Activated naive CD4-positive, alpha-beta T cell treated with anti-CD3 and anti-CD28 coated beads, Interleukin-2, amount 10 ng/mL, durations not matched to agents 7 days and 5 days (primary cell): ENCODE measurements at regions of chr3 and their contacts with region 1.

Region 1: GRCh38 chr3:192816351-192816750 is 89.0 kb upstream of the FGF12 start:
- DNase-seq: no peak
- H3K4me3 Mint-ChIP-seq: no peak overlapping the region
- H3K27ac Mint-ChIP-seq: no peak overlapping the region
- H3K4me1 Mint-ChIP-seq: peaks cover 47% of the 10 kb centered on the region
- H3K27me3 Mint-ChIP-seq: no peaks in the 10 kb centered on the region

Region 2: GRCh38 chr3:192675958-192676649 is 140.2 kb before region 1 on chr3:
- CTCF ChIA-PET with region 1: no interaction called
- DNase-seq: no peak
- H3K4me3 Mint-ChIP-seq: no peak overlapping the region
- H3K27ac Mint-ChIP-seq: no peak overlapping the region
- H3K4me1 Mint-ChIP-seq: no peaks in the 10 kb centered on the region
- H3K27me3 Mint-ChIP-seq: no peaks in the 10 kb centered on the region

Region 3: DNA sequence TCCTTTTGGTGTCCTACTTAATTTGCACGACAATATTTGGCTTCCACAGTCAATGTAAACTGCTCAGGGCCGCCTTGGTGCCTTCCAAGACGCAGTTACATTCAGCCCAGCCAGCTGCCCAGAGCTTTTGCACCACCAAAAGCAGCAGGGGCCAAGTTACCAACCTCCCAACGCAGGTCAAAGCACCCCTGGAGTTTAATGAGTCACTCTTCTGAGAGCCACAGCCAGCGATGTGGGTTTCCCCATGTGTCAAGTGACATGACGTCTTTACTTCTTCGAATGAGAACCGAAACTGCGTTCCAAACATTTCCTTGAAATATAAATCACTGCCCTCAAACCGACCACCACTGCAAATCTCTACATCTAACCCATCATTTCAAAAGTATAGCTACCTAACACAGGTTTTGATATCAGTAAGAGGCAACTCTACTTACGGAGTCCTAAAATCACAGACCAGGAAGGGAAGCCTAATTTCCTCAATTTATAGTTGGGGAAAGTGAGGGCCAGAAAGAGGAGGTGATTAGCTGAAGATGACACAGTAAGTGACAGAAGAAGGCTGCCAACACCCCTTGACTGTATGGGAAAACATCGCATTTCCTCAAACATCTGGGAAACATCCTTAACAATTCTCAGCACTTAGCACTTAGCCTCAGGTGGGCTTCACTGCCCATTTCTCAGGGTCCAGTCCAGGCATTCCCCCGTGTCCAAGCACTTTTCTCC is 76.8 kb after region 1 on chr3:
- CTCF ChIA-PET with region 1: interaction called, 11 read pairs
- DNase-seq: peak; percentile 82
- H3K4me3 Mint-ChIP-seq: peak overlapping the region; percentile 40
- H3K27ac Mint-ChIP-seq: peak overlapping the region; percentile 81
- H3K4me1 Mint-ChIP-seq: peaks cover 94% of the 10 kb centered on the region
- H3K27me3 Mint-ChIP-seq: peaks cover 19% of the 10 kb centered on the region

Region 4: DNA sequence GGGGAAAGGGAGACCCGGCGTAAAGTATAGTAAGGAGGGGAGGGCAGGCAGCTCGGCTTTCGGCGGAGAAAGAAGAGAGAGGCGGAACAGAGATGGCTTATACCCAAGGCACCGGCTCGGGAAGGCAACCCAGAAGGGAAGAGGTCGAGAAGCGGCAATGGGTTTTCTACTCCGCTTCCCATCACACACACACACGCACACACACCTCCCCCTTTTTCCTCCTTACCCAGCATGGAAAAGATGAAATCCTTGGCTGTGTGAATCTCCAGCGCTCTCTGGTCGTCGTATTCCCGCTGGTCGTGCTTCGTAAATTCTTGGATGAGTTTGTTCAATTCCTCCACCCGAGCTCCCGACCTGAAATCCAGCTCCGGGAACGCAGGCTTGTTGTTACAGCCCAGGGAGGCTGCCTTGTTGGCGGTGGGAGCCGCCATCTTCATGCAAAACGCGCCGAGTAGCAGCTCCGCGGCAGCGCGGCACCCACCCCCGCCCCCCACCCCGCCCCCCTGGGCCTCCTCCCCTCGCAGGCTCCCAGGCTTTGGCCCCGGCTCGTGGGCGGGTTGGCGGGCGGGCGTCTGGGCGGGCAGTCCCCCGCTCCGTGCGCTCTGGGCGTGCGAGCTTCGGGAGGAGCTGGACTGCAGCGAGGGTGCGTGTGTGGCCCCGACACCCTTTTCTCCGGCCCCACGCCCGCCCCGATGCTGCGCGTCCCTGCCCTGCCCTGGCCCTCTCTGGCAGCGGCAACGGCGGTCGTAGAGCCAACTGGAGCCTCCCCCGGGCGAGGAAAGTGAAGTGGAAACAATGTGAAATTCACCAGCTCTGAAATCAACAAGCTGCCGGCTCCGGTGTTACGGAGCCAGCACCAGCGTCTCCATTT is 101.3 kb after region 1 on chr3 and contains the start of gene MB21D2:
- CTCF ChIA-PET with region 1: interaction called, 41 read pairs
- DNase-seq: peak; percentile 74
- H3K4me3 Mint-ChIP-seq: peak within 1 kb of the TSS; percentile 93
- H3K27ac Mint-ChIP-seq: peak within 1 kb of the TSS; percentile 94
- H3K4me1 Mint-ChIP-seq: peaks cover 60% of the 10 kb centered on the region
- H3K27me3 Mint-ChIP-seq: peaks cover 59% of the 10 kb centered on the region

Region 5: DNA sequence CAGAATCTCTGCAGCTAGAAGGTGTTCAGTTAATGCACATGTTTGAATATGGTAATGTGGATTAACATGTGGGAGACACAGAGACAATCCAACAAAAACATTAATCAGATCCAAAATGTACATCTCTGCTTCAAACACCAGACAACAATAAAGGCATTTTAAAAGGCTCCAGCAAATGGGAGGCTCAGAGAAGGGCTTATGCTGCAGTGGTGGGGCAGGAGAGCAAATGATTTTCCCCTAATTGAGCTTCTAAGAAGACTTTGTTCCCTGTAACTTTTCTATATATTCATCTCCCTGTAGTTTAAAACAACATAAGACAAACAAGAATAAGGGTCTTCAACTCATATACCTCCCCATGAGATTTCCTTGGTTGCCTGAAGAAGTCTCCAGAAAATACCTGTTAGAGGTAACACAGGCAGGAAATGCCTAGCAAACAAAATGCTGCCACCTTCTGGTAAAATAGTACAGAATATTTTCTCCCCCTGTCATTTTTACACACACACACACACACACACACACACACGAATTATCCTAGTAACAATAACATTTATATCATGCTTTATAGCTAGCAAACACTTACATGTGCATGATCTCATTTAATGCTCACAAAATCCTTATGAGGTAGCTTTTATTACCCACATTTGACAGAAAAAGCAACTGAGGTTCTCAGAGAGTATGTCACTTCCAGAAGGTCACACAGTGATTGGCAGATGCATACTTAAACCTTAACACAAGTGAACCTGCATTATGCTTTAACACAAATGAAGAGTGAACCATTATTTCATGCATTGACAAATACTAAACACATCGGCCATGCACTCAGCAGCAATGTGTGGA is 224.7 kb after region 1 on chr3:
- CTCF ChIA-PET with region 1: interaction called, 161 read pairs
- DNase-seq: no peak
- H3K4me3 Mint-ChIP-seq: no peak overlapping the region
- H3K27ac Mint-ChIP-seq: no peak overlapping the region
- H3K4me1 Mint-ChIP-seq: peaks cover 7% of the 10 kb centered on the region
- H3K27me3 Mint-ChIP-seq: no peaks in the 10 kb centered on the region

Region 6: GRCh38 chr3:193572426-193572908 is 756.1 kb after region 1 on chr3:
- CTCF ChIA-PET with region 1: interaction called, 18 read pairs
- DNase-seq: peak; percentile 66
- H3K4me3 Mint-ChIP-seq: no peak overlapping the region
- H3K27ac Mint-ChIP-seq: no peak overlapping the region
- H3K4me1 Mint-ChIP-seq: no peaks in the 10 kb centered on the region
- H3K27me3 Mint-ChIP-seq: no peaks in the 10 kb centered on the region